Activated B cell treated with CpG ODN at 0.5 μM for 24 hours (primary cell): ENCODE measurements at regions of chr10 and their contacts with region 1.

Region 1: DNA sequence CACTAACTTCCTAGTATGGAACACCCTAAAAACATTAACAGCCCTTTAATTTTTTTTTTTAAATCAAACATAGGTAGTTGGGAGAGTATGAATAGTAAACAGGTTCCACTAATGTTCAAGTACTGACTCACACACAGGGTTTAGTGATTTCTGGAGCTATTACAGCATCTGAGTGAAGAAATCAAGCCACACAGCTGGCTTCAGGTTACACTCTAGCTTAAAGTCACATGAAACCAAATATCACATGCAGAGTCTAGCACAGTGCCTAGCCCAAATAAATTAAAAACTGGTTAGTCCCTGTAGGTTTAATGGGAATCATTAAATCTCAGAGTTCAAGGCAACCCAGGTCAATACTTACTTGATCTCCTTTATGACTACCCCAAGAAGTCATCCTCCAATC is 11.6 kb downstream of the PANK1 start:
- DNase-seq: no peak
- ATAC-seq: no peak
- H3K4me3 Mint-ChIP-seq: no peak overlapping the region
- H3K27ac Mint-ChIP-seq: no peak overlapping the region
- H3K4me1 Mint-ChIP-seq: no peaks in the 10 kb centered on the region
- H3K27me3 Mint-ChIP-seq: no peaks in the 10 kb centered on the region
- CTCF ChIP-seq: no peak

Region 2: GRCh38 chr10:89574368-89574767 is 59.1 kb before region 1 on chr10:
- CTCF ChIA-PET with region 1: no interaction called
- POLR2A ChIA-PET with region 1: no interaction called
- intact Hi-C with region 1: loop called (anchors 10 kb)
- DNase-seq: no peak
- ATAC-seq: no peak
- H3K4me3 Mint-ChIP-seq: no peak overlapping the region
- H3K27ac Mint-ChIP-seq: no peak overlapping the region
- H3K4me1 Mint-ChIP-seq: no peaks in the 10 kb centered on the region
- H3K27me3 Mint-ChIP-seq: no peaks in the 10 kb centered on the region
- CTCF ChIP-seq: no peak